PC-9 (cell line): ENCODE measurements at regions of chr1 and their contacts with region 1.

Region 1: GRCh38 chr1:90045853-90046563 is 51.1 kb downstream of the ZNF326 start:
- DNase-seq: peak in 1 of 2 experiments; percentile 7
- H3K4me3 ChIP-seq: no peak overlapping the region
- H3K27ac ChIP-seq: no peak overlapping the region
- H3K4me1 ChIP-seq: no peaks in the 10 kb centered on the region
- H3K27me3 ChIP-seq: no peaks in the 10 kb centered on the region
- CTCF ChIP-seq: peak; percentile 88

Region 2: GRCh38 chr1:90100566-90100965 is 54.6 kb after region 1 on chr1:
- CTCF ChIA-PET with region 1: no interaction called
- POLR2A ChIA-PET with region 1: no interaction called
- intact Hi-C with region 1: loop called (anchors 2 kb)
- DNase-seq: no peak
- H3K4me3 ChIP-seq: no peak overlapping the region
- H3K27ac ChIP-seq: no peak overlapping the region
- H3K4me1 ChIP-seq: no peaks in the 10 kb centered on the region
- H3K27me3 ChIP-seq: no peaks in the 10 kb centered on the region
- CTCF ChIP-seq: no peak